ENCODE measurements at regions of chr10 and their contacts with region 1.

Region 1: DNA sequence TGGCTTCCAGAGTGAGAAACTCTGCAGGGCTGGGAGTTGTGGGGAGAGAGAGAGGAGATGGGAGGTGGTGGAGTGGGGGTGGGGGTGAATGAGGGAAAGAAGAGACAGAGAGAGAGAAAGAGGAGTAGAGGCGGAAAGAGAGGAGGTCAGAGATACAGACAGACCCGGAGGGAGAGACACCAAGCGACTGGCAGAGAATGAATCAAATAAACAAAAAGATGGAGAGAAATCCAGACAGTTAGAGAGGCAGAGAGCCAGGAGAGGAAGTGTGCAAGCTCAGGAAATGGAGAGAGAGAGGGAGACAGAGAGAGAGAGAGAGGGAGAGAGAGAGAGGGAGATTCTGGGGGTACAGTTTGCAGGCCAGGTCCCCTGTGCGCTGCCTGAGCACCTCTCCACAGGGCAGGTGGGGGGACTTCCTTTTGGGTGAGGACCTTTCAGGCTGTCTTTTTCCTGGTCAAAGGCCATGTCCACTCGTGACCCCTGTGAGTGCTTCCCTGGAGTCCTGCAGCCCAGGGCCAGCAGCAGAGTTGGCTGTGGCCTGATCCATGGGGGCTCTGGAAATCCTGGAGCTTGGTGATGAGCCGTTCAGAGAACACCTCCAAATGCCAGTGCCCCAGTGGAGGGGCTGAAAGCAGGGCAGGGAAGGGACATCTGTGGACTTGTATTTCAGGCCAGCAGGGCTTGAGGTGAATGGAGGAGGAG is 25.0 kb upstream of the PCBD1 start:
- DNase-seq: no peak
- H3K4me3 ChIP-seq: no peak overlapping the region
- H3K27ac ChIP-seq: no peak overlapping the region
- H3K4me1 ChIP-seq: no peaks in the 10 kb centered on the region
- H3K27me3 ChIP-seq: no peaks in the 10 kb centered on the region
- CTCF ChIP-seq: no peak
- POLR2A ChIP-seq: no peak

Region 2: GRCh38 chr10:71278691-71279588 is 365.6 kb after region 1 on chr10:
- intact Hi-C with region 1: loop called (anchors 5 kb)
- DNase-seq: no peak
- H3K4me3 ChIP-seq: no peak overlapping the region
- H3K27ac ChIP-seq: no peak overlapping the region
- H3K4me1 ChIP-seq: no peaks in the 10 kb centered on the region
- H3K27me3 ChIP-seq: no peaks in the 10 kb centered on the region
- CTCF ChIP-seq: no peak
- POLR2A ChIP-seq: no peak

Measured in uterus (tissue), 4 donors.